WTC11 (cell line): ENCODE measurements at regions of chr5 and their contacts with region 1.

Region 1: DNA sequence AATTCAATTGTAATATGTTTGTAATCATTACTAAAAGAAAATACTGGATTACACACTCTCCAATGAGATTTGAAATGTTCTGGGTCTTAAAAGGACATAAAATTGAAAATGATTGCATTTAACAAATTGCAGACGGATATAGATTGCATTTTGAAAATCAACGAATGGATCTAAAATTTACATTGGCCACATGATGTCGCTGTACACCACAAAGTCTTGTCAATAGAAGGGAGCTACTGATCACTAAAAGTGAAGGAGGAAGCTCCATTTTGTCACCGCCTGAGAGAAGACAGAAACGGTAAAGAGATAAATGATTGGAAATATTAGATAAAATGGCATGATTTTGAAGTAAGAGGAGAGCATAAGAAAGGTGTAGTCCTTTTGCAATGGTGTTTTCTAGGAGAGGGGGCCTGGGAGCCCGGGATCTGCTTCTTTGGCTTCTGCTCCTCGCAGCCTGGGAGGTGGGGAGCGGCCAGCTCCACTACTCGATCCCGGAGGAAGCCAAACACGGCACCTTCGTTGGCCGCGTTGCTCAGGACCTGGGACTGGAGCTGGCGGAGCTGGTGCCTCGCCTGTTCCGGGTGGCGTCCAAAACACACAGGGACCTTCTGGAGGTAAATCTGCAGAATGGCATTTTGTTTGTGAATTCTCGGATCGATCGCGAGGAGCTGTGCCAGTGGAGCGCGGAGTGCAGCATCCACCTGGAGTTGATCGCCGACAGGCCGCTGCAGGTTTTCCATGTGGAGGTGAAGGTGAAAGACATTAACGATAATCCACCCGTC is at the start of gene PCDHA1:
- DNase-seq: peak; percentile 24
- ATAC-seq: peak; percentile 69
- H3K4me3 Mint-ChIP-seq: peak within 1 kb of the TSS; percentile 58
- H3K27ac Mint-ChIP-seq: no peak within 1 kb of the TSS
- H3K4me1 Mint-ChIP-seq: peaks cover 5% of the 10 kb centered on the region; the same call in 1 of the 2 replicates
- H3K27me3 Mint-ChIP-seq: peaks cover 6% of the 10 kb centered on the region
- CTCF ChIP-seq: peak; percentile 49
- total RNA-seq, gene PCDHA1: 2.2 to 2.7 TPM (median 2.4 TPM) in 3 replicates

Region 2: DNA sequence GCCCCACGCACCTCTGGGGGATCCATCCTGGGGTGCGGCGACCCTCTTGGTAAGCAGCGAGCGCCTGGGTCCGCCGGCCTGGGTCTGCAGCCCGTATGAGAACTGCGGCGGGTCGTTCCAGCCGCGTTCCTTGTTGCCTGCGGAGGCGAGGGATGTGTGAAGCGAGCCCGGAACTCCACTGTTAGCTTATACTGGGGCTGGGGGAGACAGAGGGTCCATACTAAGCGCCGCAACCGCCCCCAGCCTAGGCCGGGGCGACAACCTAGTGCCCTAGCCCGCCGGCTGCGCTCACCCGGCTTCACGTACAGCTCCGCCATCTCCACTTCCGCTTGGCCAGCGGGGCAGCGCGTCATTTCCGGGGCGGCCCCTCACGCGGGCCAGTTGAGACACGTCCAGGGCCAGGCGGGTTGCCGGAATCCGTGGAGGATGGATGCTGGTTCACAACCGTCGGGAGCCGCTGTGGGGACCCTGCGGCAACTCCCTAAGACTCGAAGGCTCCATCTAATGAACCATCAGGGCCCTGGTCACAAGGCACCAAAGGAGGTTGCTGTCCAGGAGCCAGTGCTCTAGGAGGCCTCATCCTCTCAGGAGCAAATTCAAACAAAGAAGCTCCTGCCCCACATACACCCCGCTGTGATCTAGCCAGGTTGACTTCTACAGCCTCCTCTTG is 228.8 kb before region 1 on chr5 and contains the start of gene SRA1:
- CTCF ChIA-PET with region 1: no interaction called
- POLR2A ChIA-PET with region 1: no interaction called
- DNase-seq: peak; percentile 95
- ATAC-seq: peak; percentile 94
- H3K4me3 Mint-ChIP-seq: peak within 1 kb of the TSS; percentile 87
- H3K27ac Mint-ChIP-seq: peak within 1 kb of the TSS; percentile 88
- H3K4me1 Mint-ChIP-seq: peaks cover 24% of the 10 kb centered on the region
- H3K27me3 Mint-ChIP-seq: no peaks in the 10 kb centered on the region; the same call in 1 of the 2 replicates
- CTCF ChIP-seq: no peak
- total RNA-seq, gene SRA1: 34.5 to 37.8 TPM (median 34.6 TPM) in 3 replicates

Region 3: DNA sequence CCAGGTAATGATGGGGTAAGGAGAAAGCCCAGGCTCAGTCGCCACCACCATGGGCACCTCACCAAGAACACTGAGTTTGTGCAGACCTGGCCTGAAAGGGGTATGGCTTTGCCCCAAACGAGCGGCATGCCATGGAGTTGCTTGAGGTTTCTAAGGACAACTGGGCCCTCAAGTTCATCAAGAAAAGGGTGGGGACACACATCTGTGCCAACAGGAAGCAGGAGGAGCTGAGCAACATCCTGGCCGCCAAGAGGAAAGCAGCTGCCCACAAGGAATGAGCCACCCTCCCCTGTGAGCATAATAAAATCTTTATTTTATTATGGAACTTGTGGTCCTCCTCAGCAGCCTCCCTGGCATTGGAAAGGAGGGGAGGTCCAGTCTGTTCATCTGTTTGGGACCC is 177.0 kb before region 1 on chr5:
- CTCF ChIA-PET with region 1: no interaction called
- POLR2A ChIA-PET with region 1: no interaction called
- DNase-seq: no peak
- ATAC-seq: no peak
- H3K4me3 Mint-ChIP-seq: no peak overlapping the region
- H3K27ac Mint-ChIP-seq: no peak overlapping the region
- H3K4me1 Mint-ChIP-seq: no peaks in the 10 kb centered on the region
- H3K27me3 Mint-ChIP-seq: peaks cover 29% of the 10 kb centered on the region
- CTCF ChIP-seq: no peak

Region 4: DNA sequence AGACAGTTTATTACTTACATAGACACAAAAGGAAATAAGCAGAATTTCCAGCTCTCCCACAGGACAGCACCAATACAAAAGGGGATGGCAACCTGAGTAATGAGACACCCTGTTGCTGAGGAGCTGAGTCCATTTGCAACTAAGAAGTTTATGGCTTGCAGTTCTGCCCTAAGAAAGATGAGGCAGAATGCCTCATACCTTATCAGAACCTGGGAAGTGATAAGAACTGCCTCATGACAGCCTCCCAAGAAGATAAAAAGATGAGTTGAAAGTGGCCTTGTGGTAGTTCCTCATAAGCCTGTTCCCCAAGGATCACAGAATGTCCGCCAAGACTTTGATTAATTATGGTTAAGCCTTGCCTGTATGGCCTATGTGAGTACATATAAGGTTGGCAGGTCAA is 44.1 kb before region 1 on chr5:
- CTCF ChIA-PET with region 1: interaction called, 11 read pairs
- POLR2A ChIA-PET with region 1: no interaction called
- DNase-seq: no peak
- ATAC-seq: no peak
- H3K4me3 Mint-ChIP-seq: no peak overlapping the region
- H3K27ac Mint-ChIP-seq: no peak overlapping the region
- H3K4me1 Mint-ChIP-seq: no peaks in the 10 kb centered on the region
- H3K27me3 Mint-ChIP-seq: peaks cover 5% of the 10 kb centered on the region
- CTCF ChIP-seq: no peak

Region 5: GRCh38 chr5:140806834-140807775 is 21.0 kb after region 1 on chr5 and contains the start of gene PCDHA4:
- CTCF ChIA-PET with region 1: interaction called, 38 read pairs
- POLR2A ChIA-PET with region 1: interaction called, 4 read pairs
- DNase-seq: peak; percentile 90
- ATAC-seq: peak; percentile 89
- H3K4me3 Mint-ChIP-seq: peak within 1 kb of the TSS; percentile 92
- H3K27ac Mint-ChIP-seq: peak within 1 kb of the TSS; percentile 36; the same call in 1 of the 2 replicates
- H3K4me1 Mint-ChIP-seq: peaks cover 7% of the 10 kb centered on the region
- H3K27me3 Mint-ChIP-seq: no peaks in the 10 kb centered on the region
- CTCF ChIP-seq: peak; percentile 80
- total RNA-seq, gene PCDHA4: 5.4 to 6.3 TPM (median 5.6 TPM) in 3 replicates

Region 6: GRCh38 chr5:140827704-140828361 is 41.7 kb after region 1 on chr5 and contains the start of gene PCDHA6:
- CTCF ChIA-PET with region 1: interaction called, 15 read pairs
- POLR2A ChIA-PET with region 1: no interaction called
- DNase-seq: no peak
- ATAC-seq: peak; percentile 24; the same call in 1 of the 2 replicates
- H3K4me3 Mint-ChIP-seq: peak within 1 kb of the TSS; percentile 74
- H3K27ac Mint-ChIP-seq: no peak within 1 kb of the TSS
- H3K4me1 Mint-ChIP-seq: peaks cover 4% of the 10 kb centered on the region; the same call in 1 of the 2 replicates
- H3K27me3 Mint-ChIP-seq: no peaks in the 10 kb centered on the region
- CTCF ChIP-seq: no peak
- total RNA-seq, gene PCDHA6: 2.0 to 2.4 TPM (median 2.4 TPM) in 3 replicates

Region 7: GRCh38 chr5:140868721-140869554 is 82.8 kb after region 1 on chr5 and contains the start of gene PCDHA11:
- CTCF ChIA-PET with region 1: interaction called, 16 read pairs
- POLR2A ChIA-PET with region 1: no interaction called
- DNase-seq: no peak
- ATAC-seq: peak; percentile 93
- H3K4me3 Mint-ChIP-seq: peak within 1 kb of the TSS; percentile 88
- H3K27ac Mint-ChIP-seq: peak within 1 kb of the TSS; percentile 78
- H3K4me1 Mint-ChIP-seq: peaks cover 16% of the 10 kb centered on the region
- H3K27me3 Mint-ChIP-seq: no peaks in the 10 kb centered on the region
- CTCF ChIP-seq: no peak
- total RNA-seq, gene PCDHA11: 5.8 to 8.7 TPM (median 7.9 TPM) in 3 replicates